ENCODE measurements at regions of chr1 and their contacts with region 1.

Region 1: DNA sequence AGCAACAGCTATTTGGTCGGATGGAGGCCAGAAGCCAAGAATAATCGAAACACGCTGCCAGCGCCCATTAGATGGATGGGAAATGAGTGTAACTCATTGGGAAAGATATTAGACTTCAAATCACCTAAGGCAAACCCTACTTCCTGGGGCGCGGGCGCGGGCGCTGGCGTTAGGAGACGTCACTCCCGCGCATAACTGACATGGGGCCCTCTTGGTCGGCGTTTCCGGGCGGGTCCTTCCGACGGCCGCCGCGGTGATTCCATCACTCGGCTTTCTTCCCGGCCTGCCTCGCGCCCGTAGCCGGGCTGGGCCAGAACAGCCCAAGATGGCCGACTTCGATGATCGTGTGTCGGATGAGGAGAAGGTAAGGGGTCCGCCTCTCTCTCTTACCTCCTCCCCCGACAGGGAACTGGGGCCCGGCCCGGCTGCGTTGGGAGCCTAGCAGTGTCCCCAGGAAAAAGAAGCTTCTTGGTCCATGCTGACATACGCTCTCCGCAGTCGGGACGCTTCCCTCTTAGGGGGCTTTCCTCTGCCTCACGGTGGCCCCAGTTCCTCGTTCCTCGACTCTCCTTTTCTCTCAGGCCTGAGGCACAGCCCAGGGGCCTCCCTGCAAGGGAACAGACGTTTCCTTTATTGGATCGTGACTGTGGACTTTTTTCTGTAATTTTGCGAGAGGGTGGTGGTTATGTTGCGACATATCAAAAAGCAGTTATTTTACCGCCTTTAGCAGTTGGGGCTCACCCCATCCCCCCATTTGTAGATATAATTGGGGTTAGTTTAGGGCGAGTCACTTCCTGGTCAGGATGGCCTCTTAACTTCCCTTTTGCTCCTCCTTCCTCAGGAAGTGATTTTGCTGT is at the start of gene CAPZA1:
- DNase-seq: peak; percentile 95
- H3K4me3 ChIP-seq: peak within 1 kb of the TSS; percentile 83
- H3K27ac ChIP-seq: peak within 1 kb of the TSS; percentile 99
- H3K4me1 ChIP-seq: peaks cover 18% of the 10 kb centered on the region
- H3K27me3 ChIP-seq: no peaks in the 10 kb centered on the region
- CTCF ChIP-seq: no peak; the same call in 1 of the 2 replicates
- total RNA-seq, gene CAPZA1: 158 and 171 TPM in 2 replicates

Region 2: DNA sequence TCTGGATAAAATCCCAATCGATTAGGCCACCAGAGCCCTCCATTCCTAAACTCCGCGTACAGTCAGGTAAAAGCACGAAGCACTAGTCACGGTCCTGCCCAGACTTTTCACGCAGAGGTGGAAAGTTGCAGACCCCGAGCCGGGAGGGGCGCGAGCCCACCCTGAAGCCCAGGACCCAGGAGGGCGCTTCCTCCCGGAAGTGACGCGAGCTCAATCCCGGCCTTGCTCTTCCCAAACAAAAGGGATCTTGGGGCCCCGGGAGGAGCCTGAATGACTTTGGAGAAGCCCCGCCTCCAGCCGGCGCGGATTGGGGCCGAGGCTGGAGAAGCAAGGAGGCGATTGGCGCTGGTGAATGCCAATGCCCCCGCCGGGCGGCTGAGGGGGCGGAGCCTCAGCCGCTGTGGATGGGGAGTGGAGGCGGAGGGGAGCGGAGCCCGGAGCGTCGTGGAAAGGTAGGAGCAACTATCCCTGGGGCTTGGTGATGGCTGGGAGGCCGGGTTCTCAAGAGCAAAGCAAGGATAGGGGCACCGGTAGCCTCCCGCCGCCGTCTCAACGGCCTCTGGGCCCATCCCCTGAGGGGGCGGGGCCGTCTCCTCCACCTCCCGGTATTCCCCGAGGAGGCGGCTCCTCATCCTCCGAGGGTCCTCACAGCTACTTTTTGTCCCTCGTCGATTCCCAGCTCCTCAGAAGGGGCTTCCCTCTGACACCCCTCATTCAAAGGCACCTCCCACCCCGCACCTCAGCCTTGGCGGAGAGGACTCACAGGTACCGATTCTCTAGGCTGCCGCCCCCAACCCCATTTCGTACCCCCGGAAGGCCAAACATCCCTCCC is 223.7 kb before region 1 on chr1 and contains the start of gene CTTNBP2NL:
- CTCF ChIA-PET with region 1: interaction called, 10 read pairs
- POLR2A ChIA-PET with region 1: no interaction called
- intact Hi-C with region 1: loop called (anchors 2 kb)
- DNase-seq: peak; percentile 99
- H3K4me3 ChIP-seq: peak within 1 kb of the TSS; percentile 99
- H3K27ac ChIP-seq: peak within 1 kb of the TSS; percentile 82
- H3K4me1 ChIP-seq: peaks cover 41% of the 10 kb centered on the region
- H3K27me3 ChIP-seq: no peaks in the 10 kb centered on the region
- CTCF ChIP-seq: no peak
- total RNA-seq, gene CTTNBP2NL: 28.1 and 32.7 TPM in 2 replicates

Region 3: GRCh38 chr1:112466078-112466660 is 153.6 kb before region 1 on chr1:
- CTCF ChIA-PET with region 1: no interaction called
- POLR2A ChIA-PET with region 1: no interaction called
- intact Hi-C with region 1: loop called (anchors 10 kb)
- DNase-seq: peak; percentile 92
- H3K4me3 ChIP-seq: peak overlapping the region; percentile 37
- H3K27ac ChIP-seq: no peak overlapping the region
- H3K4me1 ChIP-seq: peaks cover 6% of the 10 kb centered on the region
- H3K27me3 ChIP-seq: no peaks in the 10 kb centered on the region
- CTCF ChIP-seq: peak; percentile 93

Region 4: GRCh38 chr1:112501810-112502641 is 117.7 kb before region 1 on chr1:
- CTCF ChIA-PET with region 1: no interaction called
- POLR2A ChIA-PET with region 1: no interaction called
- intact Hi-C with region 1: loop called (anchors 2 kb)
- DNase-seq: peak; percentile 78
- H3K4me3 ChIP-seq: peak overlapping the region; percentile 55
- H3K27ac ChIP-seq: no peak overlapping the region
- H3K4me1 ChIP-seq: no peaks in the 10 kb centered on the region
- H3K27me3 ChIP-seq: no peaks in the 10 kb centered on the region
- CTCF ChIP-seq: peak; percentile 75

Region 5: GRCh38 chr1:112674439-112674985 is 54.8 kb after region 1 on chr1 and contains the start of gene MOV10:
- CTCF ChIA-PET with region 1: no interaction called
- POLR2A ChIA-PET with region 1: no interaction called
- intact Hi-C with region 1: loop called (anchors 10 kb)
- DNase-seq: peak; percentile 84
- H3K4me3 ChIP-seq: peak within 1 kb of the TSS; percentile 84
- H3K27ac ChIP-seq: peak within 1 kb of the TSS; percentile 92
- H3K4me1 ChIP-seq: peaks cover 16% of the 10 kb centered on the region
- H3K27me3 ChIP-seq: no peaks in the 10 kb centered on the region
- CTCF ChIP-seq: no peak
- total RNA-seq, gene MOV10: 87.1 and 114 TPM in 2 replicates